ENCODE measurements at regions of chr1 and their contacts with region 1.

Region 1: DNA sequence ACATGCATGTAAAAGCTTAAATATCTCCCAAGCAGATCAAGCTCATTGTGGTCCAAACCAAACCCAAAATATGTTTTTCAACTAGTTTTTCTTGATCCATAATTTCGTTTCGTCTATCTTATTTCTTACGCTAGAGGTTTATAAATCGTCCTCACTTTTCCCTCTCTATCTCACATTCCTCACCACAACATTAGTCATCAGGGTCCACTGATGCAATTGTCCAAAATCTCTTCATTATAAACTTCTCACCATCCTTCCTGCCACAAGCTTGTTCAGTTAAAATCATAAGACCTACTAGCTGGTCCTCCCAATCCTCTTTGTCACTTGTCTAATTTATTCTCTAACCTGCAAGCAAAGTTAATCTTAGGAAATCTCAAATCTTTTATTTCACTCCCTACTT is 173.0 kb upstream of the PALMD start:
- DNase-seq: no peak
- ATAC-seq: no peak
- H3K4me3 ChIP-seq: no peak overlapping the region
- H3K27ac ChIP-seq: no peak overlapping the region
- H3K4me1 ChIP-seq: no peaks in the 10 kb centered on the region
- H3K27me3 ChIP-seq: no peaks in the 10 kb centered on the region
- CTCF ChIP-seq: no peak

Region 2: GRCh38 chr1:98794196-98794886 is 678.6 kb before region 1 on chr1:
- intact Hi-C with region 1: loop called in 1 of 3 experiments (anchors 10 kb)
- DNase-seq: peak in 3 of 6 donors; percentile 10 to 43 (median 25)
- ATAC-seq: peak; percentile 73 to 95 (median 92)
- H3K4me3 ChIP-seq: no peak overlapping the region
- H3K27ac ChIP-seq: no peak overlapping the region
- H3K4me1 ChIP-seq: no peaks in the 10 kb centered on the region
- H3K27me3 ChIP-seq: no peaks in the 10 kb centered on the region
- CTCF ChIP-seq: peak; percentile 48 to 58 (median 58)

Region 3: GRCh38 chr1:99170516-99170915 is 302.4 kb before region 1 on chr1:
- intact Hi-C with region 1: loop called in 1 of 3 experiments (anchors 10 kb)
- DNase-seq: no peak
- ATAC-seq: peak in 2 of 4 donors; percentile 46 to 47
- H3K4me3 ChIP-seq: no peak overlapping the region
- H3K27ac ChIP-seq: no peak overlapping the region
- H3K4me1 ChIP-seq: peaks cover 0 to 11% (median 4%) of the 10 kb centered on the region in 3 donors
- H3K27me3 ChIP-seq: no peaks in the 10 kb centered on the region
- CTCF ChIP-seq: no peak

Region 4: DNA sequence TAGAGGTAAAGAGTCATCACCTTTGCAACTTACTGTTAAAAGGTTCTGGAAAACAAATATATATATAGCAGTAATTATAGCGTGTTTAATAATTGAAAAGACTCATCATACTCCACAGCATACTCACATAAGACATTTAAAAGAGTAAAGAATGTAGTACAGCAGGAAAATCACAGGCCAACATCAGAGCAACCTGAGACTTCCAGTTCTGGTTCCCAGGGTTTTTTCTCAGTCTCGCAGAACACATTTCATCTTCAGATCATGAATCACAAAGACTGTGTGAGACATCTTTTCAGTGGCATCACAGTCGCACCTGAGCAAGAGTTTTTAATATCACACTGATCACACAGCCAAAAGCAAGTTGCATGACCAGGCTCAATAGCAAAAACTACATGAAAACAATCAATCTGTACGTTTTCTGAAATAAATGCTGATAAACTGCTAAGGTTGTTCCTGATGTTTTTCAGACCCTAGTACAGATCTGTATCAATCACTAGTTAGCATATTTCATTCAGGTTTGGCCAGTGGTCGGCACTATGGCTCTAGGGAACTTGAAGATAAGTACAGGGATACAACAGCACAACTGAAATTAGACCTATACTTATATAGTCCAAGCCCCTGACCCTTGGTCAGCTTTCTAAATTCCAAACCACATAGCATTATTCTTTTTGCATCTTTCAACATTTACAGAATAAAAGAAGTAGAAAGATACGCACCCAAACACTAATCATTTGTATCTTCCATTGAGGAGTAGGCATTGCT is 66.1 kb before region 1 on chr1:
- intact Hi-C with region 1: no loop called
- DNase-seq: no peak
- ATAC-seq: no peak
- H3K4me3 ChIP-seq: no peak overlapping the region
- H3K27ac ChIP-seq: no peak overlapping the region
- H3K4me1 ChIP-seq: no peaks in the 10 kb centered on the region
- H3K27me3 ChIP-seq: no peaks in the 10 kb centered on the region
- CTCF ChIP-seq: no peak

Region 5: DNA sequence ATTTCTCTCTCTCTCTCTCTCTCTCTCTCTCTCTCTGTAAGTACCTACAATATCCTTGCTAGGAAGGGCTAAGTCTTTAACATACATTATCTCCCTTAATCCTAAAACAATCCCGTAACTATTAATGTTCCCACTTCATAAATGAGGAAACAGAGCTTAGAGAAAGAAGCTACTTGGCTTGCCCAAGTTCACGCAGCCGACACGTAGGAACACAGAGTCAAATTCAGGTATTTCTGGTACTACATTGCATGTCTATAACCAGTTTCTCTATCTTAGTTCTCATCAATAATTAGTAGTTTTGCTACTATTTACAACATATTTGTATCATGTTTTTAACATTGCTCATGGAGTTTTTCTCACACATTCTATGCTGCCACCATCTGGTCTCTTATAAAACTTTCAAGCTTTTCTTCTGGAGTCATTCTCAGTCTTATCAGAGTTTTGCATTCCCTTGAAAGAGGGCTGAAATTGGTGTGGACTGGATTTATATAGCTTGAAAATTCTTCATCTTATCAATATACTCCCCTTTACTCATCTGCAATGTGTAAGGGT is 54.1 kb after region 1 on chr1:
- intact Hi-C with region 1: no loop called
- DNase-seq: no peak
- ATAC-seq: no peak
- H3K4me3 ChIP-seq: no peak overlapping the region
- H3K27ac ChIP-seq: no peak overlapping the region
- H3K4me1 ChIP-seq: peaks cover 0 to 8% (median 3%) of the 10 kb centered on the region in 3 donors
- H3K27me3 ChIP-seq: no peaks in the 10 kb centered on the region
- CTCF ChIP-seq: no peak